A673 (cell line): ENCODE measurements at regions of chr21 and their contacts with region 1.

Region 1: DNA sequence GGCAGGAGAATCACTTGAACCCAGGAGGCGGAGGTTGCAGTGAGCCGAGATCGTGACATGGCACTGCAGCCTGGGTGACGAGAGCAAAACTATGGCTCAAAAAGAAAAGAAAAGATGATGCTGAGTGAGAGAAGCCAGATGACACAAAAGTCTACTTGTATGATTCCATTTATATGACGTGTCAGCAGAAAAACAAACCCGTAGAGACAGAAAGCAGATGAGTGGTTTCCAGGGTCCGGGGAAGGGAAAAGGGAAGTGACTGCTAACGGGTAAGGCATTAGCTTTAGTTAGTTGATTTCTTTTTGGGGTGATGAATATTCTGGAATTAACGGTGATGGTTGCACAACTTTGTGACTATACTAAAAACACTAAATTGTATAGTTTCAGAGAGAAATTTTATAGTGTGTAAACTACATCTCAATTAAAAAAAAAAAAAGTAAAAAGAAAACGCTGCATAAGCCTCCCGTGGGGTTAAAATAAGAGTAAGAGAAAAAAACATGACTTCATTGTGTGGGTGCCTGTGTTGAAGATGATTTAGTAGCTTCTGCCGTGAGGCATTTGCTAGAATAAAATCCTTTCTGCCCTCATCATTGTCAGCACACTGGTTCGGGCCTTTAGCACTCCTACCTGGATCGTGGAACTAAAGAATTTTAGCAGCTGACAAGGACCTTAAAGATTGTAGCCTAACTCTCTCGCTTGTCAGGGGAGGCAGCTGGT is 24.7 kb upstream of the ATP5PO start:
- DNase-seq: no peak
- H3K4me3 ChIP-seq: no peak overlapping the region
- H3K27ac ChIP-seq: no peak overlapping the region
- H3K4me1 ChIP-seq: peaks cover 3% of the 10 kb centered on the region
- H3K27me3 ChIP-seq: no peaks in the 10 kb centered on the region
- CTCF ChIP-seq: no peak

Region 2: DNA sequence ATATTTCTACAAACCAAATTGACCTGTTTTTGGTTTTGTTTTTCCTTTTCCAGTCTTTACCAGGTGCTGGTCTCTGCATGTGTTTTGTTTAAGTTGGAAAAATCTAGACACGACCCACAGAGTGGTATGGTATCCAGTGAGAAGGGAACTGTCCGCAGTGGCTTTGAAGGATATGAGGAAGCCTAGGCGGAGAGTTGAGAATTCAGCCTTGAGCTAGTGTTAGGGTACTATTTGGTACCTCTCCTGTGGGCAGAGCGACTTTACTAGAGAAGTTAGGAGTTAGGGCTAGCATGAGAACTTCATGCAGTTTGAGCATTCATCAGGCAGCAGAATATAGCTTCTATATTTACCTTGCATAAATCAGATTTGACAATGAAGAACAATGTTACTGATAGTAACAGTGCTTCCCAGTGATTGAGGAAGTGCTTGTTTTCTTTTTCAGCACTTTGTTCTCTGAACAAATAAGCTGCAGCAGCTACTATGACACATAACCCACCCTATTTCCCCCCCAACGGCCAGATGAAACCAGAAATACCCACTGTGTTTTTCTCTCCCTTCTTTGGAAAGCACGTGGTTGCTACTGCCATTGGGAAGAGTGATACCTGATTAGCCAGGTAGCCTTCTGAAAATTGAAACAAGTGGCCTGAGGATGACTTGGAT is 152.1 kb after region 1 on chr21:
- CTCF ChIA-PET with region 1: interaction called, 11 read pairs
- POLR2A ChIA-PET with region 1: no interaction called
- intact Hi-C with region 1: no loop called
- DNase-seq: no peak
- H3K4me3 ChIP-seq: no peak overlapping the region
- H3K27ac ChIP-seq: peak overlapping the region; percentile 15
- H3K4me1 ChIP-seq: peaks cover 12% of the 10 kb centered on the region
- H3K27me3 ChIP-seq: no peaks in the 10 kb centered on the region
- CTCF ChIP-seq: no peak